Activated B cell treated with CpG ODN at 0.5 μM for 24 hours (primary cell): ENCODE measurements at regions of chr19 and their contacts with region 1.

Region 1: DNA sequence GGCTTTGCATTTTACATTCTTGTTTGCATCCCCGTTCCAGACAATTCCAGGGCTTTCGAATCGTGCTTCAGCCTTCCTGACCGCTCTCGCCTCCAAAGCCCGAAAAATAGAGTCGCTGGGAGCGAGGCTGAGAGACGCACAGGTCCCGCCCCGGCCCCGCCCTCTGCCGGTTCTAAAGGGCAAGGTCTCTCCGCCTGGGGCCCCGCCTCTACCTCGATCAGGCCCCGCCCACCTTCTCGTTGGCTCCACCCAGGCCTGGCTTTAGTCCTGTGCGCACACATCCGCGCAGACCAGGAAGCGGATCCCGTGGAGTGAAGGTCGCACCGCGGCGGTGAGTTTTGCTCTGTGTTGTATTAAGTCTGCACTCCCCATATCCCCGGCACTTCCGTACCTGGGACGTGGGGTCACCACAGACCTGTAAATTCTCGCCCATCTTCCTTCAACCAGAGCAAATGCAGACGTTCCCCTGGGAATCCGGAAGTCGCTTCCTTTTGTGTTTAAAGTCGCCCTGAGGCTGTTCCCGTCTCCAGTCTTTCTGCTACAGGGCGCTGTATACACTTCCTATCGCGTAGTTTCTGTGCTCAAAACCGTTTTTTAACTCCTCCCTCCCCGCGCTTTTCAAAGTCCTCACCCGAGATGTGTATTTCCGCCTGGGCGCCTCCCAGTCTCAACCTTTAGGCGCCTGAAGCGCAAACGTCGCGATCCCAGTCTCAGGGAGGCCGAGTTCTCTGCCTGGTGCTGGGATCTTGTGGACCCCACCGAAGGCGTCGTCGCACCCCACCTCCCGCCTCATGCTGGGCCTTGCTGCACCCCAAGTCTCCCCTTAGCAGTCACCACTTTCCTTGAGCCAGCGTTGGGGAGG is at the start of gene ZNF701:
- DNase-seq: peak; percentile 98
- ATAC-seq: peak; percentile 99
- H3K4me3 Mint-ChIP-seq: peak within 1 kb of the TSS; percentile 98
- H3K27ac Mint-ChIP-seq: peak within 1 kb of the TSS; percentile 97
- H3K4me1 Mint-ChIP-seq: peaks cover 33% of the 10 kb centered on the region
- H3K27me3 Mint-ChIP-seq: no peaks in the 10 kb centered on the region
- CTCF ChIP-seq: no peak
- total RNA-seq, gene ZNF701: 30.6 and 32.7 TPM in 2 replicates

Region 2: DNA sequence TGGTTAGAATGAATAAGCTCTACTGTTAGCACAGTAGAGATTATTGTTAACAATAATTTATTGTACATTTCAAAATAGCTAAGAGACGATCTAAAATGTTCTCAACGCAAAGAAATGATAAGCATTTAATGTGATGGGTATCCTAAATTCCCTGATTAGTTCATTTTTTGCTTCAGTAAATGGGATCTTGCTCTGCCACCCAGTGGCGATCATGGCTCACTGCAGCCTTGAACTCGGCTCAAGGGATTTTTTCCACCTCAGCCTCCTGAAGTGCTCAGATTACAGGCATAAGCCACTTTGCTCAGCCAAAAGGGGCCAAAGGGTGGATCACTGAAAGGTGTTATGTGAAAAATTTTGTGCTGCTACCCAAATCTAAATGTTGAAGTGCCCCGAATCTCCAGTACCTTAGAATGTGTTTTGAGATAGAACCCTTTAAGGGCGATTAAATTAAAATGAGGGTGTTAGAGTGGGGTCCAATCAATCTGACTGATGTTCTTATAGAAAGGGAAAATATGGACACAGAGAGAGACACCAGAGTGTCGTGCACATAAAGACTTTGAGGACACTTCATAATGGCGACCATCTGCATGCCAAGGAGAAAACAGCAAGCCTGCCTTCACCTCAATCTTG is 332.3 kb before region 1 on chr19:
- CTCF ChIA-PET with region 1: no interaction called
- POLR2A ChIA-PET with region 1: no interaction called
- intact Hi-C with region 1: no loop called
- DNase-seq: peak; percentile 28
- ATAC-seq: peak; percentile 81
- H3K4me3 Mint-ChIP-seq: no peak overlapping the region
- H3K27ac Mint-ChIP-seq: no peak overlapping the region
- H3K4me1 Mint-ChIP-seq: no peaks in the 10 kb centered on the region
- H3K27me3 Mint-ChIP-seq: no peaks in the 10 kb centered on the region
- CTCF ChIP-seq: peak; percentile 61

Region 3: GRCh38 chr19:52336117-52336790 is 234.0 kb before region 1 on chr19 and contains the start of gene ZNF610:
- CTCF ChIA-PET with region 1: no interaction called
- POLR2A ChIA-PET with region 1: no interaction called
- intact Hi-C with region 1: loop called (anchors 1 kb)
- DNase-seq: peak; percentile 84
- ATAC-seq: peak; percentile 96
- H3K4me3 Mint-ChIP-seq: peak within 1 kb of the TSS; percentile 97
- H3K27ac Mint-ChIP-seq: peak within 1 kb of the TSS; percentile 93
- H3K4me1 Mint-ChIP-seq: peaks cover 14% of the 10 kb centered on the region
- H3K27me3 Mint-ChIP-seq: no peaks in the 10 kb centered on the region
- CTCF ChIP-seq: no peak
- total RNA-seq, gene ZNF610: 1.1 and 2.0 TPM in 2 replicates

Region 4: DNA sequence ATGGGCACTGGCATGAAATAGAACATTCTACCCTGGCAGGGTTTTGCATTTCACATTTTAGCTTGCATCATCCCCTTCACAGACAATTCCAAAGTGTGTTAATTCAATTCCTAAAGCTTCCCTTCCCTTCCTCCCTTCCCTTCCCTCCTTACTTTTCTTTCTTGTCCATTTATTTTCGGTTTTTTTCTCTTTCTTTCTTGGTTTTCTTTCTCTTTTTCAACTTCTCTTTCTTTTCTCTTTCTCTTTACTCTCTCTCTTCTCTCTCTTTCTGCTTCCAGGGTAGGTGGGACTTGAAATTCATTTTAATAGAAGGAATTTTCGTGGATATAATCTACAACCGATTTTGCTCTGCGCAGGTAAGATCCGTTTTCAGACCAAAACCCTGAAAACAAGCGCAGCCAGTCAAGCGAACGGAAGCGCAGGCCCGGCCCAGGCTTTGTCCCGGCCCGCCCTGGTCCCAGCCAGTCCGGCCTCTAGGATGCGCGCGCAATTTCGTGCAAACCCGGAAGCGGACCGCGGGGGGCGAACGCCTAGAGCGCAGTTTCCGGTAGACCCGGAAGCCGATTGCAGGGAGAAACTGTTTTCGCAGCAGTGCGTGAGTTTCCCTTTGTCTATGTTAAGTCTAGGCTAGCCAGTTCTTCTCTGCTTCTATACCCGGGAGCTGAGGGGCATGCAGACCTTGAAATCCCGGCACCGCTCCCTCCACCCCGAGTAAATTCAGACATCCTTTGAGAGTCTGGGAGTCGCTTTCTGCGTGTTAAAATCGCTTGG is 172.7 kb before region 1 on chr19 and contains the start of gene ZNF528:
- CTCF ChIA-PET with region 1: no interaction called
- POLR2A ChIA-PET with region 1: no interaction called
- intact Hi-C with region 1: loop called (anchors 1 kb)
- DNase-seq: peak; percentile 91
- ATAC-seq: peak; percentile 99
- H3K4me3 Mint-ChIP-seq: peak within 1 kb of the TSS; percentile 90
- H3K27ac Mint-ChIP-seq: peak within 1 kb of the TSS; percentile 91
- H3K4me1 Mint-ChIP-seq: peaks cover 18% of the 10 kb centered on the region
- H3K27me3 Mint-ChIP-seq: no peaks in the 10 kb centered on the region
- CTCF ChIP-seq: no peak
- total RNA-seq, gene ZNF528: 29.8 and 40.3 TPM in 2 replicates

Region 5: GRCh38 chr19:52535771-52536447 is 34.3 kb before region 1 on chr19:
- CTCF ChIA-PET with region 1: no interaction called
- POLR2A ChIA-PET with region 1: interaction called, 3 read pairs
- intact Hi-C with region 1: loop called (anchors 1 kb)
- DNase-seq: peak; percentile 86
- ATAC-seq: peak; percentile 98
- H3K4me3 Mint-ChIP-seq: peak overlapping the region; percentile 92
- H3K27ac Mint-ChIP-seq: peak overlapping the region; percentile 86
- H3K4me1 Mint-ChIP-seq: peaks cover 23% of the 10 kb centered on the region
- H3K27me3 Mint-ChIP-seq: no peaks in the 10 kb centered on the region
- CTCF ChIP-seq: no peak

Region 6: DNA sequence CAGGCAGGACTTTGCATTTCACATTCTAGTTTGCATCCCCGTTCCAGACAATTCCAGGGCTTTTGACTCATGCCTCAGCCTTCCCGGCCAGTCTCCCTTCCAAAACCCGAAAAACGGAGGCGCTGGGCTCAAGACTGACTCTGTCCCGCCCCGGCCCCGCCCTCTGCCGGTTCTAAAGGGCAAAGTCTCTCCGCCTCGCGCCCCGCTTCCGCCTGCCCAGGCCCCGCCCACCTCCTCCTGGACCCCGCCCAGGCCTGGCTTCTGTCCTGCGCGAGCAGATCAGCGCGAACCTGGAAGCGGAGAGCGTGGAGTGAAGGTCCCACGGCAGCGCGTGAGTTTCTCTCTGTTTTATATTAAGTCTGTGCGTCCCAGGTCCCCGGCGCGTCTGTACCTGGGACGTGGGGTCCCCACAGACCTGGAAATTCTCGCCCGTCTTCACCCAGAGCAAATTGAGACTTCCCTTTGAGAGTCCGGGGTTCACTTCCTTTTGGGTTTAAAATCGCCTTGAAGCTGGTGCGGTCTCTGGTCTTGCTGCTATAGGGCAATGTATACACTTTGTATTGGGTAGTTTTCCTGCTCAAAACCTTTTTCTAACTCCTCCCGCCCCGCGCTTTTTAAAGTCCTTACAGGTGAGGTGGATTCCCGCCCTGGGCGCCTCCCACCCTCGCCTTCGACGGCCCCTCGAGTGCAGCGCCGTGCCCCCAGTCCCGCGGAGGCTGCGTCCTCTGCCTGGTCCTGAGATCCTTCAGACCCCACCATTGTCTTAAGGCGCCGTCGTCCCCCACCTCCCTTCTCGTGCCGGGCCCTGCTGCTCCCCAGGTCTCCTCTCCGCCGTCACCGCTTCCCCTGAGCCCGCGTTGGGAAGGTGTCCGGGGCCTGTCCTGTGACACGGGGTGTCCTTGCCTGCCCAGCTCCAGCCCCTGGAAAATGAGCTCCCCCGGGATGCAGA is 31.1 kb after region 1 on chr19:
- CTCF ChIA-PET with region 1: no interaction called
- POLR2A ChIA-PET with region 1: no interaction called
- intact Hi-C with region 1: loop called (anchors 1 kb)
- DNase-seq: peak; percentile 95
- ATAC-seq: peak; percentile 99
- H3K4me3 Mint-ChIP-seq: peak overlapping the region; percentile 93
- H3K27ac Mint-ChIP-seq: peak overlapping the region; percentile 86
- H3K4me1 Mint-ChIP-seq: peaks cover 26% of the 10 kb centered on the region
- H3K27me3 Mint-ChIP-seq: no peaks in the 10 kb centered on the region
- CTCF ChIP-seq: no peak